Activated T-helper 2 cell treated with anti-CD3 and anti-CD28 coated beads, Interferon-gamma antibody, Interleukin-2, Interleukin-4, amounts not matched to agents 10 μg/mL and 5 μg/mL and 100 μg/mL, durations not matched to agents 14 hours and 24 hours and 36 hours (primary cell): ENCODE measurements at regions of chr10 and their contacts with region 1.

Region 1: DNA sequence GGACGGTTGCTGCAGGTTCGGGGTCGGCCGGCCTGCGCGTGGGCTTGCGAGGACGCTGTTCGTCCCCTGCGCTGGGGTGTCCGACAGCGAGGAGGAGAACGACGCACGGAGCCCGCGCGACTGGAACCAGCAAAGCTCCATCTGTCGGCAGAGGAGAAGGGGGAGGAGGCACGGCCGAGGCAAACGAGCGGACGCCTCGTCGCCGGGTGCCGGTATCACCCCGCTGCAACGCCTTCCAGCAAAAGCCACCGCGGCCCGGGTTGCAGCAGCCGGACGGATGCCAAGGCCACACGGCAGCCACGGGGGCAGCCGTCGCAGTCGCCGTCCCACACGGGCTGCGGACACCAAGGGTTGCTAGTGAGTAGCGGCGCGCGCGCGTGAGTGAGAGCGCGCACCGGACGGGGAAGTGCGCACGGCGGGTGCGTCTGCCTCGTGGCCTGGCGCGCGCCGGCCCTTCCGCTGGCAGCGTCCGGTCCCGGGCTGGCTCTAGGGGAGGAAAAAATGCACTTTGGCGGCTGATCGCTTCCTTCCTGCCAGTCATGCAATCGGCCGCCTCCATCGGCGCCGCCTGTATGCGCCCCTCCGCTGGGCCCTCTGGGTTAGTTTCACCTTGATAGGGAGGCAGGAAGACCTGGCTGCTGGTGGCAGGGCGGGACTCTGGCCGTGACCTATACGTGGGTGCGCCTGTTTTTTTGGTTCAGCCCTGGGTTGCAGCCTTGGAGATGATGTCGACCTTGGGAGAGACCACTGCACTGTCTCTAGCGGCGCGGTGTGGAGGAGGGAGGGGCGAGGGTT is 434 bp downstream of the STAMBPL1 start:
- DNase-seq: peak; percentile 79
- H3K4me3 Mint-ChIP-seq: peak overlapping the region; percentile 97
- H3K27ac Mint-ChIP-seq: peak overlapping the region; percentile 98
- H3K4me1 Mint-ChIP-seq: peaks cover 59% of the 10 kb centered on the region
- H3K27me3 Mint-ChIP-seq: no peaks in the 10 kb centered on the region

Region 2: GRCh38 chr10:88848499-88848898 is 32.0 kb before region 1 on chr10:
- intact Hi-C with region 1: loop called (anchors 1 kb)
- DNase-seq: no peak
- H3K4me3 Mint-ChIP-seq: no peak overlapping the region
- H3K27ac Mint-ChIP-seq: peak overlapping the region; percentile 60
- H3K4me1 Mint-ChIP-seq: peaks cover 27% of the 10 kb centered on the region
- H3K27me3 Mint-ChIP-seq: peaks cover 4% of the 10 kb centered on the region

Region 3: DNA sequence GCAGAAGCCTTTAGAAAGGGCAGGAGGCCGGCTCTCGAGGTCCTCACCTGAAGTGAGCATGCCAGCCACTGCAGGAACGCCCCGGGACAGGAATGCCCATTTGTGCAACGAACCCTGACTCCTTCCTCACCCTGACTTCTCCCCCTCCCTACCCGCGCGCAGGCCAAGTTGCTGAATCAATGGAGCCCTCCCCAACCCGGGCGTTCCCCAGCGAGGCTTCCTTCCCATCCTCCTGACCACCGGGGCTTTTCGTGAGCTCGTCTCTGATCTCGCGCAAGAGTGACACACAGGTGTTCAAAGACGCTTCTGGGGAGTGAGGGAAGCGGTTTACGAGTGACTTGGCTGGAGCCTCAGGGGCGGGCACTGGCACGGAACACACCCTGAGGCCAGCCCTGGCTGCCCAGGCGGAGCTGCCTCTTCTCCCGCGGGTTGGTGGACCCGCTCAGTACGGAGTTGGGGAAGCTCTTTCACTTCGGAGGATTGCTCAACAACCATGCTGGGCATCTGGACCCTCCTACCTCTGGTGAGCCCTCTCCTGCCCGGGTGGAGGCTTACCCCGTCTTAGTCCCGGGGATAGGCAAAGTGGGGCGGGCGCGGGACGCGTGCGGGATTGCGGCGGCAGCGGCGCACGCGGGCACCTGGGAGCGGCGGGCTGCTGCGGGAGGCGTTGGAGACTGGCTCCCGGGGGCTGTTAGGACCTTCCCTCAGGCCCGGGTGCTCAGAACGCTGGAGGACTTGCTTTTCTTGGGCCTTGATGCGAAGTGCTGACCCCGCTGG is 110.1 kb after region 1 on chr10 and contains the start of gene FAS:
- intact Hi-C with region 1: loop called (anchors 1 kb)
- DNase-seq: peak; percentile 70
- H3K4me3 Mint-ChIP-seq: peak within 1 kb of the TSS; percentile 98
- H3K27ac Mint-ChIP-seq: peak within 1 kb of the TSS; percentile 98
- H3K4me1 Mint-ChIP-seq: peaks cover 59% of the 10 kb centered on the region
- H3K27me3 Mint-ChIP-seq: no peaks in the 10 kb centered on the region
- total RNA-seq, gene FAS: 20.7 and 22.5 TPM in 2 replicates